IMR-90 (cell line): ENCODE measurements at regions of chr4 and their contacts with region 1.

Region 1: GRCh38 chr4:105352826-105353225 is 121.0 kb downstream of the PPA2 start:
- DNase-seq: peak; percentile 56
- ATAC-seq: peak; percentile 44; the same call in 1 of the 2 replicates
- H3K4me3 ChIP-seq: no peak overlapping the region
- H3K27ac ChIP-seq: no peak overlapping the region
- H3K4me1 ChIP-seq: peaks cover 1% of the 10 kb centered on the region; the same call in 1 of the 2 replicates
- H3K27me3 ChIP-seq: no peaks in the 10 kb centered on the region
- CTCF ChIP-seq: no peak
- POLR2A ChIP-seq: no peak
- RAD21 ChIP-seq: no peak

Region 2: GRCh38 chr4:105304085-105304484 is 48.7 kb before region 1 on chr4:
- CTCF ChIA-PET with region 1: no interaction called
- POLR2A ChIA-PET with region 1: no interaction called
- dilution Hi-C with region 1: no loop called
- in situ Hi-C with region 1: no loop called
- intact Hi-C with region 1: loop called (anchors 5 kb)
- DNase-seq: no peak
- ATAC-seq: no peak
- H3K4me3 ChIP-seq: no peak overlapping the region
- H3K27ac ChIP-seq: no peak overlapping the region
- H3K4me1 ChIP-seq: no peaks in the 10 kb centered on the region
- H3K27me3 ChIP-seq: no peaks in the 10 kb centered on the region
- CTCF ChIP-seq: no peak
- POLR2A ChIP-seq: no peak
- RAD21 ChIP-seq: no peak

Region 3: GRCh38 chr4:105551965-105552746 is 199.3 kb after region 1 on chr4 and contains the start of gene ARHGEF38:
- CTCF ChIA-PET with region 1: no interaction called
- POLR2A ChIA-PET with region 1: no interaction called
- dilution Hi-C with region 1: no loop called
- in situ Hi-C with region 1: no loop called
- intact Hi-C with region 1: no loop called
- DNase-seq: peak; percentile 7
- ATAC-seq: peak; percentile 32; the same call in 1 of the 2 replicates
- H3K4me3 ChIP-seq: no peak within 1 kb of the TSS
- H3K27ac ChIP-seq: no peak within 1 kb of the TSS
- H3K4me1 ChIP-seq: no peaks in the 10 kb centered on the region
- H3K27me3 ChIP-seq: no peaks in the 10 kb centered on the region
- CTCF ChIP-seq: no peak
- POLR2A ChIP-seq: no peak
- RAD21 ChIP-seq: no peak
- total RNA-seq, gene ARHGEF38: not detected in 2 replicates

Region 4: DNA sequence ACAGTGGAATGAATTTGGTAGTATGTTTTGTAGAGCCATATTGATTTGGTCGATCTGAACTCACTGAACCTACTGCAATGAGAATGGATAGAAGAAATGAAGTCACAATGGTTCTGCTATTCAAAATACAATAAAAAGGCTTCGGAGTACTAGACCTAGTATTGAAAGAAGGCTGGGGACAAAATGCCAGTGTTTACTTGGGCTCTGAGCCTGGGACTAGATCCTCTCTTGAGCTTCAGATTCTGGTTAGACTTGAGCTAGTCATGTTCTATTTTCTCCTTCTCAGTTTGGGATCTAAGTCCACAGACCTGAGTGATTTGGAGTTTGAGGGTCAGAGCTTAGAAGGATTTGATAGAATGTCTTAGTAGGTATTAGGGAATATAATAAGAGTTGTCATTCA is 345.8 kb after region 1 on chr4:
- CTCF ChIA-PET with region 1: no interaction called
- POLR2A ChIA-PET with region 1: no interaction called
- dilution Hi-C with region 1: no loop called
- in situ Hi-C with region 1: no loop called
- intact Hi-C with region 1: no loop called
- DNase-seq: no peak
- ATAC-seq: no peak
- H3K4me3 ChIP-seq: no peak overlapping the region
- H3K27ac ChIP-seq: no peak overlapping the region
- H3K4me1 ChIP-seq: no peaks in the 10 kb centered on the region
- H3K27me3 ChIP-seq: no peaks in the 10 kb centered on the region
- CTCF ChIP-seq: no peak
- POLR2A ChIP-seq: no peak
- RAD21 ChIP-seq: no peak